OCI-LY7 (cell line): ENCODE measurements at regions of chr15 and their contacts with region 1.

Region 1: GRCh38 chr15:43868406-43868805 is 41.6 kb downstream of the WDR76 start:
- DNase-seq: no peak
- H3K4me3 ChIP-seq: no peak overlapping the region
- H3K27ac ChIP-seq: no peak overlapping the region
- H3K4me1 ChIP-seq: no peaks in the 10 kb centered on the region
- CTCF ChIP-seq: no peak

Region 2: GRCh38 chr15:43854801-43855200 is 13.6 kb before region 1 on chr15:
- CTCF ChIA-PET with region 1: no interaction called
- POLR2A ChIA-PET with region 1: interaction called, 10 read pairs
- intact Hi-C with region 1: no loop called
- DNase-seq: no peak
- H3K4me3 ChIP-seq: no peak overlapping the region
- H3K27ac ChIP-seq: no peak overlapping the region
- H3K4me1 ChIP-seq: no peaks in the 10 kb centered on the region
- CTCF ChIP-seq: no peak

Region 3: GRCh38 chr15:44023176-44023575 is 154.8 kb after region 1 on chr15:
- CTCF ChIA-PET with region 1: no interaction called
- POLR2A ChIA-PET with region 1: no interaction called
- intact Hi-C with region 1: no loop called
- DNase-seq: no peak
- H3K4me3 ChIP-seq: no peak overlapping the region
- H3K27ac ChIP-seq: no peak overlapping the region
- H3K4me1 ChIP-seq: no peaks in the 10 kb centered on the region
- CTCF ChIP-seq: no peak

Region 4: DNA sequence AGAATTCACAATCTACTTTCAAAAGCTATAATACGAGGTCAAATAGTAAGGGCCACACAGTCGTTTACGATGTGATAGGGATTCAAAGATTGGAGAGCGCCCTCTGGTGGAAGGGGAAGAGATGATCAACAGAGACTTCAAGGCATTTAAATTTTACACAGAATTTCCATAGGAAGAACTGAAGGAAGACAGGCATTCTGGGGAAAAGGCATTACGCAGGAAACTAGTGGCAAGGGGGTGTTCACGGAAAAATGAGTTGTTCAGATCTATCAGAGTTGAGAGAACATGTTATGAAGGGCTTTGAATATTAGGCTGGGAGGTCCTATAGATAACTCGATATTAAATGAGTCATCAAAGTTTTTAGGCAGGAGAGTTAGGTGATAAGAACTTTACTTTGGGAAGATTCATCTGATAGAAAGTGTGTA is 197.9 kb after region 1 on chr15:
- CTCF ChIA-PET with region 1: no interaction called
- POLR2A ChIA-PET with region 1: no interaction called
- intact Hi-C with region 1: no loop called
- DNase-seq: peak; percentile 83
- H3K4me3 ChIP-seq: no peak overlapping the region
- H3K27ac ChIP-seq: no peak overlapping the region
- H3K4me1 ChIP-seq: no peaks in the 10 kb centered on the region
- CTCF ChIP-seq: peak; percentile 98